H1 (cell line): ENCODE measurements at regions of chr15 and their contacts with region 1.

Region 1: GRCh38 chr15:81372586-81372985 is 1.4 kb downstream of the TMC3 start:
- DNase-seq: no peak
- H3K4me3 ChIP-seq: no peak overlapping the region
- H3K27ac ChIP-seq: no peak overlapping the region
- H3K4me1 ChIP-seq: no peaks in the 10 kb centered on the region
- H3K27me3 ChIP-seq: no peaks in the 10 kb centered on the region
- CTCF ChIP-seq: no peak
- EP300 ChIP-seq: no peak
- POLR2A ChIP-seq: no peak
- RAD21 ChIP-seq: no peak

Region 2: GRCh38 chr15:81357223-81357622 is 15.4 kb before region 1 on chr15:
- CTCF ChIA-PET with region 1: interaction called, 34 read pairs
- POLR2A ChIA-PET with region 1: no interaction called
- DNase-seq: no peak
- H3K4me3 ChIP-seq: no peak overlapping the region
- H3K27ac ChIP-seq: no peak overlapping the region
- H3K4me1 ChIP-seq: peaks cover 0 to 4% (median 2%) of the 10 kb centered on the region in 4 experiments; a peak in 2 of 7 replicates
- H3K27me3 ChIP-seq: no peaks in the 10 kb centered on the region
- CTCF ChIP-seq: peak in 2 of 3 experiments; percentile 12 to 29; a peak in 1 of 4 replicates
- EP300 ChIP-seq: no peak
- POLR2A ChIP-seq: no peak
- RAD21 ChIP-seq: peak in 1 of 2 experiments; percentile 15; a peak in 1 of 4 replicates